ENCODE measurements at regions of chr21 and their contacts with region 1.

Region 1: GRCh38 chr21:32371913-32372314 is 20.9 kb downstream of the URB1 start:
- DNase-seq: peak in 1 of 2 donors; percentile 77
- H3K4me3 ChIP-seq: peak overlapping the region in 1 of 2 donors; percentile 2
- H3K27ac ChIP-seq: peak overlapping the region; percentile 84 to 86
- H3K4me1 ChIP-seq: peaks cover 0 to 31% of the 10 kb centered on the region in 2 donors
- H3K27me3 ChIP-seq: no peaks in the 10 kb centered on the region
- CTCF ChIP-seq: no peak

Region 2: DNA sequence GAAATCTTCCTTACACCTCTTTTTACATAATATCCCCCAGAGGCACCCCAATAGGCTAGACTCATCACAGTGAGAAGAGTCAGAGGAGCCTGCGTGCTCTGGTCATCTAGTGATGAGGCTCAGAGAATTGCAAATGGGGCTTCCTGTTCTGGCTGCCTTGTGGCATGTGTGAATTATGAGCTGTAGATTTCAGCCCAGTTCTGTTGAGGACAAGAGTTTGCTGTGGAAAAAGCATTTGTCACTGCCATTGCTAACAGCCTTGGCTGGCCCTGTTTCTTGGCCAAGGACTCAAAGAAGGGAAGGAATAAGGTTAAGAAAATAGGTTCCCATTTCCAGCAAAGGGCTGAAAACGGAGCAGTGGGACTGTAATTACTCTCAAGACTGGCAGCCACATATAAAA is 42.6 kb before region 1 on chr21:
- intact Hi-C with region 1: loop called (anchors 2 kb)
- DNase-seq: peak in 1 of 2 donors; percentile 86
- H3K4me3 ChIP-seq: no peak overlapping the region
- H3K27ac ChIP-seq: peak overlapping the region; percentile 81 to 89
- H3K4me1 ChIP-seq: peaks cover 15 to 20% of the 10 kb centered on the region in 2 donors
- H3K27me3 ChIP-seq: no peaks in the 10 kb centered on the region
- CTCF ChIP-seq: no peak

Measured in ascending aorta (tissue), 2 donors.